Activated T-helper 2 cell treated with anti-CD3 and anti-CD28 coated beads, Interferon-gamma antibody, Interleukin-2, Interleukin-4, amounts not matched to agents 10 μg/mL and 5 μg/mL and 100 μg/mL, durations not matched to agents 14 hours and 24 hours and 36 hours (primary cell): ENCODE measurements at regions of chr2 and their contacts with region 1.

Region 1: GRCh38 chr2:237774802-237775553 is 23.6 kb upstream of the RBM44 start:
- DNase-seq: peak; percentile 33
- H3K4me3 Mint-ChIP-seq: no peak overlapping the region
- H3K27ac Mint-ChIP-seq: peak overlapping the region; percentile 45
- H3K4me1 Mint-ChIP-seq: no peaks in the 10 kb centered on the region
- H3K27me3 Mint-ChIP-seq: no peaks in the 10 kb centered on the region

Region 2: GRCh38 chr2:237512774-237513466 is 262.1 kb before region 1 on chr2:
- intact Hi-C with region 1: loop called (anchors 10 kb)
- DNase-seq: peak; percentile 64
- H3K4me3 Mint-ChIP-seq: no peak overlapping the region
- H3K27ac Mint-ChIP-seq: no peak overlapping the region
- H3K4me1 Mint-ChIP-seq: no peaks in the 10 kb centered on the region
- H3K27me3 Mint-ChIP-seq: peaks cover 1% of the 10 kb centered on the region

Region 3: GRCh38 chr2:237691908-237692600 is 82.9 kb before region 1 on chr2:
- intact Hi-C with region 1: no loop called
- DNase-seq: peak; percentile 91
- H3K4me3 Mint-ChIP-seq: peak overlapping the region; percentile 99
- H3K27ac Mint-ChIP-seq: peak overlapping the region; percentile 98
- H3K4me1 Mint-ChIP-seq: peaks cover 59% of the 10 kb centered on the region
- H3K27me3 Mint-ChIP-seq: no peaks in the 10 kb centered on the region